K562 (cell line): ENCODE measurements at regions of chr12 and their contacts with region 1.

Region 1: DNA sequence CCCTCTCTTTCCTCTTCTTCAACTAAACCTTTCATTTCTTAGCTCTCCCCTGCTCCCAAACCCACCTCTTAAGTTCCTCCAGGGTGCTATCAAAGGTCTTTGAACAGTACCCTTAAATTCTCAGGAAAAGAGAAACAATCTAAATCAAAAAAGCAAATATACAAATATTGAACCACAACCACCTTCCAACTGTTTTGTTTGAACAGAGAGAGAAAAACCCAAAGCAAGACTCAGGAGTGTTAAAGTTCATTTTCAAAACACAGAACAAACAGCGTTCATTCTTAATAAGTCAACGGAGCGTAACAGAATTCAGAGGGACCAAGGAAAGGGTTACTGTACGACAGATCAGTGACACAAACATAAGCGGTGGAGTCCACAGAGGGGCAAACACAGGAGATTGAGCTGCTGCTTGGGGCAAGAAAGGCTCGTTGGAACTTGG is 73.3 kb downstream of the NDUFA12 start:
- DNase-seq: no peak
- ATAC-seq: no peak
- H3K4me3 ChIP-seq: no peak overlapping the region
- H3K27ac ChIP-seq: no peak overlapping the region
- H3K4me1 ChIP-seq: no peaks in the 10 kb centered on the region
- H3K27me3 ChIP-seq: peaks cover 25 to 40% of the 10 kb centered on the region in 2 experiments
- CTCF ChIP-seq: no peak
- EP300 ChIP-seq: no peak
- POLR2A ChIP-seq: no peak
- RAD21 ChIP-seq: no peak

Region 2: DNA sequence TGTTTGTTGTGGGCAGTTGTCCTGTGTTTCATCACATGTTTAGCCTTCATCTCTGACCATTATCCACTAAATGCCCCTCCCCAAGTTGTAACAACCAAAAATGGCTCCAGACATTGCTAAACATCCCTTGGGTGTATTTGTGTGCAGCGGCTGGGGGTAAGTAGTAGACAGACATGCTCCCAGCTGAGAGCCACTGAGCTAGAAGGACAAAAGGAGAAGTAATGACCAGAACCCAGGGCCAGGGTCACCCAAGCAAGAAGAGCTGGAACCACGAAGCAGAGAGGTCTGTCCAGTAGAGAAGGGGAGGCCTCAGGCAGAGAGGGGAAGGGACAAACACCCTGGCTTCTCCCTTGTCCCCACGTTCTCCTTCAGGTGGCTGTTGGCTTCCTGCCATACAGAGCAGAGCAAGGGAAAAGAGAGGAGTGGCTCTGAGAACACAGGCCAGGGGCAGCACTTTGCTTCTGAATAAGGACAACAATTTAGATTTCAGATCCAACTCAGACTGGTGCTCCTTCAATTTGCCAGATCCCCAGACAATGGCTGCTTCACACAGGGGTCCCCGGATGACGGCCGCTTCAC is 18.1 kb after region 1 on chr12:
- CTCF ChIA-PET with region 1: no interaction called
- POLR2A ChIA-PET with region 1: no interaction called
- in situ Hi-C with region 1: no loop called
- intact Hi-C with region 1: loop called (anchors 1 kb)
- DNase-seq: no peak
- ATAC-seq: peak; percentile 62
- H3K4me3 ChIP-seq: no peak overlapping the region
- H3K27ac ChIP-seq: no peak overlapping the region
- H3K4me1 ChIP-seq: peaks cover 0 to 2% of the 10 kb centered on the region in 2 experiments; a peak in 3 of 5 replicates
- H3K27me3 ChIP-seq: peaks cover 5 to 7% of the 10 kb centered on the region in 2 experiments; a peak in 2 of 5 replicates
- CTCF ChIP-seq: no peak
- EP300 ChIP-seq: no peak
- POLR2A ChIP-seq: no peak
- RAD21 ChIP-seq: no peak

Region 3: GRCh38 chr12:94977766-94978468 is 47.7 kb after region 1 on chr12:
- CTCF ChIA-PET with region 1: no interaction called
- POLR2A ChIA-PET with region 1: no interaction called
- in situ Hi-C with region 1: no loop called
- intact Hi-C with region 1: loop called (anchors 5 kb)
- DNase-seq: peak in 1 of 4 experiments; percentile 19
- ATAC-seq: peak; percentile 72
- H3K4me3 ChIP-seq: no peak overlapping the region
- H3K27ac ChIP-seq: no peak overlapping the region
- H3K4me1 ChIP-seq: peaks cover 0 to 5% of the 10 kb centered on the region in 2 experiments; a peak in 2 of 5 replicates
- H3K27me3 ChIP-seq: no peaks in the 10 kb centered on the region
- CTCF ChIP-seq: no peak
- EP300 ChIP-seq: no peak
- POLR2A ChIP-seq: no peak
- RAD21 ChIP-seq: no peak